Stomach (tissue), 19 donors: ENCODE measurements at regions of chr3 and their contacts with region 1.

Region 1: GRCh38 chr3:99833617-99834205 is 16.0 kb downstream of the CMSS1 start:
- DNase-seq: peak in 1 of 2 donors; percentile 46
- H3K4me3 ChIP-seq: no peak overlapping the region
- H3K27ac ChIP-seq: no peak overlapping the region
- H3K4me1 ChIP-seq: peaks cover 0 to 23% (median 4%) of the 10 kb centered on the region in 4 donors
- H3K27me3 ChIP-seq: no peaks in the 10 kb centered on the region
- CTCF ChIP-seq: no peak
- EP300 ChIP-seq: no peak
- POLR2A ChIP-seq: no peak

Region 2: GRCh38 chr3:100073899-100074307 is 240.2 kb after region 1 on chr3:
- intact Hi-C with region 1: loop called (anchors 10 kb)
- DNase-seq: peak in 1 of 2 donors; percentile 82
- H3K4me3 ChIP-seq: peak overlapping the region in 1 of 4 donors; percentile 10
- H3K27ac ChIP-seq: peak overlapping the region in 4 of 5 donors; percentile 17 to 72 (median 60)
- H3K4me1 ChIP-seq: peaks cover 19 to 66% (median 29%) of the 10 kb centered on the region in 4 donors
- H3K27me3 ChIP-seq: no peaks in the 10 kb centered on the region
- CTCF ChIP-seq: no peak
- EP300 ChIP-seq: no peak
- POLR2A ChIP-seq: no peak